Common myeloid progenitor, CD34-positive (primary cell): ENCODE measurements at regions of chr22 and their contacts with region 1.

Region 1: GRCh38 chr22:46699091-46699490 is 39.0 kb downstream of the CERK start:
- DNase-seq: no peak
- H3K4me3 ChIP-seq: no peak overlapping the region
- H3K27ac ChIP-seq: no peak overlapping the region
- H3K4me1 ChIP-seq: no peaks in the 10 kb centered on the region
- H3K27me3 ChIP-seq: no peaks in the 10 kb centered on the region

Region 2: GRCh38 chr22:46710806-46711205 is 11.7 kb after region 1 on chr22:
- CTCF ChIA-PET with region 1: no interaction called
- POLR2A ChIA-PET with region 1: interaction called, 11 read pairs
- DNase-seq: no peak
- H3K4me3 ChIP-seq: no peak overlapping the region
- H3K27ac ChIP-seq: no peak overlapping the region
- H3K4me1 ChIP-seq: no peaks in the 10 kb centered on the region
- H3K27me3 ChIP-seq: no peaks in the 10 kb centered on the region